ENCODE measurements at regions of chr1 and their contacts with region 1.

Region 1: DNA sequence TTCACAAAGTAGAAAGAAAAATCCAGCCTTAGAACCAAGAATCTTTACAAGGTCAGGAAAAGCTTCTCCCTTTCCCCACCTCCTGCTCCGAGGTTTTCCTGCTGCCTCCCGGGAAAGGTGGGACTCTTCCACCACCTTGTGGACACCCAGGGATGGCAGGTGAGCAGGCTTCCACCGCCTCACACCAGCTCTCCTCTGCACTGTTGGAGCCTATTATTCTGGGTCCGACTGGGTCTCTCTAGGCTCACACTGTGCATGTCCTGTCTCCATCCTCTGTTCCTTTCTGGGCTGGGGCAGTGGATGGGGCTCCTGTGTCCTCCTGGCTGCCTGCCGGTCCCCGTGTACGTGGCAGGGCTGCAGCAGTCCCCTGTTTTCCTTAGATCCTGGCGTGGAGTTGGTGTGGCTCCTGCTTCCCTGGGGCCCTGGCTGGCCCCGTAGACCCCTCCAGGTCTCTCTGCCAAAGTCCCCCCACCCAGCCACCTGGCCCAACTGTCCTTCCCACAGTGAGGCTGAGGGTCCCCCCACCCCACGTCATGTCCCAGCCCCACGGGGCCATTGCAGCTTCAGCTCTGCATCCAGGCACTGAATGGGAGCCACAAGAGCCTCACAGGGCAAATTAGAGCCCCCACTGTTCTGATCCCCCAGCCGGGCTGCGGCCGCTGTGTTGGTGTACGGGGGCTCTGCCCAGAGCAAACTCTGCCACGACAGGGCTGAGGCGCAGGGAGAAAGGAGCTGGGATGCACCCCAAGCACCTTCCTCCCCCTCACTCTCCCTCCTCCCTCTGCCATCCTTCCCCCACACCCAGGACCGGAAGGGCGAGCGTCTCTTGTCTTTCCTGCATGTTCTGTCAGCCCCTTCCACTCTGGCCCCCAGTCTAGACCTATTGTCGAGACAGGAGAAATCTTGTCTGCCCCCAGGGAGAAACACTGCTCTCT is 3.3 kb upstream of the SLC45A1 start:
- DNase-seq: peak; percentile 76
- H3K4me3 ChIP-seq: no peak overlapping the region
- H3K27ac ChIP-seq: no peak overlapping the region
- H3K4me1 ChIP-seq: peaks cover 7% of the 10 kb centered on the region
- H3K27me3 ChIP-seq: no peaks in the 10 kb centered on the region
- CTCF ChIP-seq: peak; percentile 86 to 88
- POLR2A ChIP-seq: no peak

Region 2: DNA sequence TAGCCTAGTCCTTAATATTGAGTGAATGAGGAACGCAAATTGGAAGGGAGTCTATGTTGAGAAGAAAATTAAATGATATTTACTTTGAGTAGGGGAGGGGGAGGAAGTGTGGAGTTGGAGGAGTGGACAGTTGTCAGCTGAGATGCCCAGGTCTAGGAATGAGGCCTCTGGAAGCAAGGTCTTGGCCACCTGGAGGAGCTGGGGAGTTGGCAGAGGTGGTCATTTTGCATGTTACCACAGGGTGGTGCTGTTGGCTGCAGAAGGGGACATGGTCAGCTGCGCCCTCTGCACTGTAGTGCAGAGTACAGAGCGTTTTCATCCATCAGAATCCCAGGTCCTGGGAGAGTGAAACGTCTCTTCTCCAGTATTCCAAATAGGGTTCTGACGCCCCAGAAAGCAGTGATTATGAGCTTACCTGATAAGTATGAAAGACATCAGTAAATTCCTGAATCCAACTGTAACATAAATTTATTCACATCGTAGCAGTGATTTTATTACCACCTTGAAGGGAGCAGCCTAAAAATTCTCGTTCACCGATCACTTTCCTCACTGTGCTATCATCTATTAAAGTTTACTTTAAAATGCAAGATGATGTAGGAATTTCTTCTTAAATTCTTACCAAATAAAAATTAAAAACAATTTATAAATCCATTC is 339.3 kb before region 1 on chr1:
- CTCF ChIA-PET with region 1: interaction called, 147 read pairs
- POLR2A ChIA-PET with region 1: no interaction called
- dilution Hi-C with region 1: no loop called
- intact Hi-C with region 1: loop called (anchors 1 kb)
- DNase-seq: peak; percentile 81
- H3K4me3 ChIP-seq: no peak overlapping the region
- H3K27ac ChIP-seq: no peak overlapping the region
- H3K4me1 ChIP-seq: no peaks in the 10 kb centered on the region
- H3K27me3 ChIP-seq: no peaks in the 10 kb centered on the region
- CTCF ChIP-seq: peak; percentile 85 to 94
- POLR2A ChIP-seq: no peak

Region 3: DNA sequence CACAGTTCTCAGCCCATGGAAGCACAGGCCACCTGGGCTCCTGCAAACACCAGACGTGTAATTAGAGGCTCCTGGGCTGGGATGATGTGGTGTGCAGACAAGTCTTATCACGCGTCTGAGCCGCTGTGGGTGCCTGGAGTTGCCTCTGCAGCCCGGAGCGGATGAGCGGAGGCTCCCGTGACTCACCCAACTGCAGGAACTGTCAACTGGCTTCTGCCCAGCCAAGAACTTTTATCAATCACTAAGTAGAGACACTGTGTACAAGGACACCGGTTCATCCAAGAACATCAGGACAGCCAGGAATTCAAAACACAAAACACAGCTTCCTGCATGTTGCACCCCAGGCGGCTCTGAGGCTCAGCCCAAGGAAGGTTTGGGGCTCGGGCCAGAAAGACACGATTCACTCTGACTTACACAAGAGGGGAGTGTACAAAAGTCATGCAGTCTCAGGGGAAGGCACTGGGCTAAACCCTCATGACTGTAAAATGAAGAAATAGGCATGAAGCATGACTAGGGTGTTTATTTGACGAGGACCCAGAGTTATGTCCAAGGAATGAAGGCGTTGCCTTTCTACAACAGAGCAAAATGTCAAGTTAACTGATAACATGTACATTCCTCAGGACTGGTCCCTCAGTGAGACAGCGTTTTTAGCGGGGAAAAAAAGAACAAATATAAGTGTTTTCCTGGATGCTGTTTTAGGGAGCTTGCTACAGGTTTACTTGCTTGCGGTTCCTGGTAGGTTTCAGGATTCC is 309.6 kb before region 1 on chr1:
- CTCF ChIA-PET with region 1: interaction called, 21 read pairs
- POLR2A ChIA-PET with region 1: no interaction called
- dilution Hi-C with region 1: loop called (anchors 10 kb)
- intact Hi-C with region 1: no loop called
- DNase-seq: peak; percentile 71
- H3K4me3 ChIP-seq: no peak overlapping the region
- H3K27ac ChIP-seq: peak overlapping the region; percentile 65
- H3K4me1 ChIP-seq: peaks cover 20% of the 10 kb centered on the region
- H3K27me3 ChIP-seq: no peaks in the 10 kb centered on the region
- CTCF ChIP-seq: no peak
- POLR2A ChIP-seq: no peak

Region 4: GRCh38 chr1:8040586-8040985 is 274.0 kb before region 1 on chr1:
- CTCF ChIA-PET with region 1: interaction called, 138 read pairs
- POLR2A ChIA-PET with region 1: no interaction called
- dilution Hi-C with region 1: no loop called
- intact Hi-C with region 1: no loop called
- DNase-seq: peak; percentile 98
- H3K4me3 ChIP-seq: no peak overlapping the region
- H3K27ac ChIP-seq: peak overlapping the region; percentile 58
- H3K4me1 ChIP-seq: peaks cover 15% of the 10 kb centered on the region
- H3K27me3 ChIP-seq: no peaks in the 10 kb centered on the region
- CTCF ChIP-seq: no peak
- POLR2A ChIP-seq: no peak

Region 5: GRCh38 chr1:8121261-8122170 is 193.1 kb before region 1 on chr1:
- CTCF ChIA-PET with region 1: interaction called, 25 read pairs
- POLR2A ChIA-PET with region 1: no interaction called
- dilution Hi-C with region 1: no loop called
- intact Hi-C with region 1: loop called (anchors 1 kb)
- DNase-seq: peak; percentile 99
- H3K4me3 ChIP-seq: peak overlapping the region in 1 of 3 experiments; percentile 6
- H3K27ac ChIP-seq: peak overlapping the region; percentile 96
- H3K4me1 ChIP-seq: peaks cover 50% of the 10 kb centered on the region
- H3K27me3 ChIP-seq: no peaks in the 10 kb centered on the region
- CTCF ChIP-seq: no peak
- POLR2A ChIP-seq: peak; percentile 44

Region 6: GRCh38 chr1:8238851-8239305 is 75.7 kb before region 1 on chr1:
- CTCF ChIA-PET with region 1: interaction called, 17 read pairs
- POLR2A ChIA-PET with region 1: no interaction called
- dilution Hi-C with region 1: no loop called
- intact Hi-C with region 1: no loop called
- DNase-seq: peak; percentile 33
- H3K4me3 ChIP-seq: no peak overlapping the region
- H3K27ac ChIP-seq: peak overlapping the region; percentile 36
- H3K4me1 ChIP-seq: peaks cover 25% of the 10 kb centered on the region
- H3K27me3 ChIP-seq: no peaks in the 10 kb centered on the region
- CTCF ChIP-seq: peak; percentile 6 to 21
- POLR2A ChIP-seq: no peak

Region 7: GRCh38 chr1:8302081-8302956 is 12.3 kb before region 1 on chr1:
- CTCF ChIA-PET with region 1: interaction called, 13 read pairs
- POLR2A ChIA-PET with region 1: no interaction called
- dilution Hi-C with region 1: no loop called
- intact Hi-C with region 1: no loop called
- DNase-seq: no peak
- H3K4me3 ChIP-seq: no peak overlapping the region
- H3K27ac ChIP-seq: no peak overlapping the region
- H3K4me1 ChIP-seq: no peaks in the 10 kb centered on the region
- H3K27me3 ChIP-seq: peaks cover 0 to 2% of the 10 kb centered on the region in 2 experiments
- CTCF ChIP-seq: no peak
- POLR2A ChIP-seq: no peak

Region 8: DNA sequence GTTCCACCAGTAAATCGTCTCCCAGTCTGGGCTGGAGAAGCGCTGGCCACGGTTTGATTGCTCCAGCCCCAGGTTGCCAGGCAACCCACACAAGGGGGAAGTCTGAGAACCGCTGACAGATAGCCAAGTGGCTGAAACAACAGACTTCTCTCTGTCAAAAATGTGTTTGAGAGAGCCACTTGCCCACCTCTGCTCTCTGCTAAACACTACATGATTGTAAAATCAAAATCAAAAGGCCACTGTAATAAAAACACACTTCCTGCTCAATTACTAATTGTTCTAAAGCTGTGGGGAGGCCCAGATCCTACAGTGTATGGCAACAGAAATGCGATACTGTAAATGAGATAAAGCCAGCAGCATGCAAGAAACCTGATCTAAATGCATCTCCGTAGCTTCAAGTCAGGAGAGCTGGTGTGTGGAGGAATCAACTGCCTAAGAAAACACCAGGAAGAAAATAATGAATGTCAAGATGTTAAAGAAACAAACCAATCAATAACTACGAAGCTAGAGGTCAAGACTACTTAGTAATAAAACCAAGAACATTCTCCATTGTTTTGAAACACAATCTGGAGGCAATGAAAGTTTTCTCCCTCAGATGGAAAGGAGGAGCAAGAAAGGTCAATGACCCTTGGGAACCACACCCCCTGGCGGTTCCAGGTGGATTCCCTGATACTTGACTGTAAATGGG is 124.5 kb after region 1 on chr1:
- CTCF ChIA-PET with region 1: no interaction called
- POLR2A ChIA-PET with region 1: no interaction called
- dilution Hi-C with region 1: no loop called
- intact Hi-C with region 1: no loop called
- DNase-seq: peak; percentile 90
- H3K4me3 ChIP-seq: no peak overlapping the region
- H3K27ac ChIP-seq: peak overlapping the region; percentile 35
- H3K4me1 ChIP-seq: peaks cover 11% of the 10 kb centered on the region
- H3K27me3 ChIP-seq: no peaks in the 10 kb centered on the region
- CTCF ChIP-seq: no peak
- POLR2A ChIP-seq: no peak

Measured in endothelial cell of umbilical vein (primary cell).